ENCODE measurements at regions of chr6 and their contacts with region 1.

Region 1: DNA sequence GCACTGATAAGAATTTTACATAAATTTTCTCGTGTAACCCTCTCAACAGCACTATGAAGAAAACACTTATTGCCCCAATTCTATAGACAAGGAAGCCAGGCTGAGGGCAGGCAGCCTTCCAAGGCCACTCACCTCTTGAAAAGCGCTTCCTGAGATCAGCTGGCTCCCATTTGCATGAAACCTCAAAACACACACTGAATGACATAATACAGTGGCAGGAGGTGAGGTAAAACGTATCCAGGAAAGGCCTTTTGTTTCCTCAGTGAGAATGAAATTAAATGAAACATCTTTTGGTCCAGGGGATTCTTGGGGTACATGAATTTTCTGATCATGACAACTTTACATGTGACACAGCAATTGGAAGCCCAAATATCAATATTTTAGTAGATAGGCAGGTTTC is 112.5 kb downstream of the WDR27 start:
- DNase-seq: peak; percentile 79
- ATAC-seq: peak; percentile 59
- H3K4me3 ChIP-seq: peak overlapping the region in 1 of 5 experiments; percentile 52
- H3K4me3 Mint-ChIP-seq: peak overlapping the region; percentile 63
- H3K27ac ChIP-seq: peak overlapping the region; percentile 84 to 87
- H3K27ac Mint-ChIP-seq: peak overlapping the region; percentile 73
- H3K4me1 ChIP-seq: peaks cover 45 to 49% of the 10 kb centered on the region in 2 donors
- H3K4me1 Mint-ChIP-seq: peaks cover 56% of the 10 kb centered on the region
- H3K27me3 ChIP-seq: no peaks in the 10 kb centered on the region
- H3K27me3 Mint-ChIP-seq: no peaks in the 10 kb centered on the region
- CTCF ChIP-seq: no peak

Region 2: GRCh38 chr6:169640351-169640852 is 51.1 kb after region 1 on chr6:
- CTCF ChIA-PET with region 1: no interaction called
- POLR2A ChIA-PET with region 1: no interaction called
- intact Hi-C with region 1: no loop called
- DNase-seq: no peak
- ATAC-seq: no peak
- H3K4me3 ChIP-seq: no peak overlapping the region
- H3K4me3 Mint-ChIP-seq: no peak overlapping the region
- H3K27ac ChIP-seq: no peak overlapping the region
- H3K27ac Mint-ChIP-seq: no peak overlapping the region
- H3K4me1 ChIP-seq: no peaks in the 10 kb centered on the region
- H3K4me1 Mint-ChIP-seq: no peaks in the 10 kb centered on the region
- H3K27me3 ChIP-seq: no peaks in the 10 kb centered on the region
- H3K27me3 Mint-ChIP-seq: no peaks in the 10 kb centered on the region
- CTCF ChIP-seq: no peak

Region 3: GRCh38 chr6:169723200-169723909 is 134.1 kb after region 1 on chr6:
- CTCF ChIA-PET with region 1: no interaction called
- POLR2A ChIA-PET with region 1: no interaction called
- intact Hi-C with region 1: loop called (anchors 1 kb)
- DNase-seq: peak; percentile 85
- ATAC-seq: peak; percentile 39
- H3K4me3 ChIP-seq: peak overlapping the region; percentile 58 to 95 (median 77)
- H3K4me3 Mint-ChIP-seq: peak overlapping the region; percentile 90
- H3K27ac ChIP-seq: peak overlapping the region; percentile 77 to 88
- H3K27ac Mint-ChIP-seq: peak overlapping the region; percentile 89
- H3K4me1 ChIP-seq: peaks cover 17 to 18% of the 10 kb centered on the region in 2 donors
- H3K4me1 Mint-ChIP-seq: peaks cover 33% of the 10 kb centered on the region
- H3K27me3 ChIP-seq: no peaks in the 10 kb centered on the region
- H3K27me3 Mint-ChIP-seq: no peaks in the 10 kb centered on the region
- CTCF ChIP-seq: no peak

Measured in B cell (primary cell).